ENCODE measurements at regions of chr5 and their contacts with region 1.

Region 1: DNA sequence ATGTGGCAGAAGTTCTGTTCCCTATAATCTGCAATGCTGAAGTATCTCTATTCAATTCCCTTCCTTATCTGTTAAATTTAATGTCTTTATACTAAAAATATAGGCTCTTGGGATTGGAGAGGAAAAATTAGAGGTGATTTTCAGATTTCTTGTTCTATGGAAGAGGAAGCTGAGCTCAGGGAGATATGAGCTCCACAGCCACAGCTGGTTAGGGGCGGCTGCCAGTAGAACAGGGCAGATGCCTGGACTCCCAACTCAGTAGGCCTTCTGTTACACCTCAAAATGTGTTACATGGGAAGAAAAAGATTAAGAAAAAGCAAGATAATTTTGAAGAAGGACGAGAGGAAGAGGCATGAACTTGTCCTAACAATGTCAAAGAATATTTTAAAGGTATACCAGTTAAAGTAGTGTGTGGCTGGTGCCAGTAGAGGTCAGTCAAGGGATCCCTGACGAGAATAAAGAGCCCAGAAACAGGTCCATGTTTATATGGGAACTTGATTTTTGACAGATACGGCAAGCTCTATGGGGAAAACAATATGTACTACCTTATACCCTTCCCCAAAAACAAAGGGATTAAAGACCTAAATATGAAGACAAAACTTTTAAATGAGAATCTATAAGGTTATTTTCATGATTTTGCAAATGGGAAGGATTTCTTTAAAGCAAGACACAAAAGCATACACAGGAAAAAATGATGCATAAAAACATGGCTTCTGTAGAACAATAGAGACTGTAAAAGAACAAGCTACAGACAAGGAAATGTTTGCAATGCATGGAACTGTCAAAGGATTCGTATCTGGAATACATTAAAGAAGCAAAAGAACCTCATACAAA is 28.7 kb downstream of the DNAJC21 start:
- DNase-seq: peak; percentile 36
- ATAC-seq: peak; percentile 87
- H3K4me3 ChIP-seq: no peak overlapping the region
- H3K27ac ChIP-seq: 0 out of 2 replicates have a peak overlapping the region, but pooled peaks have one; percentile 33
- H3K4me1 ChIP-seq: peaks cover 5% of the 10 kb centered on the region
- H3K27me3 ChIP-seq: no peaks in the 10 kb centered on the region
- CTCF ChIP-seq: peak; percentile 66
- POLR2A ChIP-seq: no peak
- RAD21 ChIP-seq: peak; percentile 65

Region 2: GRCh38 chr5:35003018-35003957 is 45.2 kb after region 1 on chr5:
- CTCF ChIA-PET with region 1: interaction called, 7 read pairs
- POLR2A ChIA-PET with region 1: no interaction called
- dilution Hi-C with region 1: no loop called
- in situ Hi-C with region 1: no loop called
- intact Hi-C with region 1: loop called (anchors 2 kb)
- DNase-seq: peak; percentile 46
- ATAC-seq: peak; percentile 89
- H3K4me3 ChIP-seq: no peak overlapping the region
- H3K27ac ChIP-seq: no peak overlapping the region
- H3K4me1 ChIP-seq: 0 out of 2 replicates have a peak, but pooled peaks cover 2% of the 10 kb centered on the region
- H3K27me3 ChIP-seq: peaks cover 19% of the 10 kb centered on the region
- CTCF ChIP-seq: peak; percentile 85
- POLR2A ChIP-seq: no peak
- RAD21 ChIP-seq: peak; percentile 73

Region 3: GRCh38 chr5:35182541-35183535 is 224.8 kb after region 1 on chr5:
- CTCF ChIA-PET with region 1: no interaction called
- POLR2A ChIA-PET with region 1: no interaction called
- dilution Hi-C with region 1: no loop called
- in situ Hi-C with region 1: no loop called
- intact Hi-C with region 1: loop called (anchors 1 kb)
- DNase-seq: peak; percentile 60
- ATAC-seq: peak; percentile 81
- H3K4me3 ChIP-seq: no peak overlapping the region
- H3K27ac ChIP-seq: no peak overlapping the region
- H3K4me1 ChIP-seq: no peaks in the 10 kb centered on the region
- H3K27me3 ChIP-seq: peaks cover 20% of the 10 kb centered on the region
- CTCF ChIP-seq: peak; percentile 75
- POLR2A ChIP-seq: no peak
- RAD21 ChIP-seq: peak; percentile 80